Activated CD4-positive, alpha-beta T cell treated with anti-CD3 and anti-CD28 coated beads, Interleukin-2, amount 10 ng/mL, durations not matched to agents 7 days and 5 days (primary cell): ENCODE measurements at regions of chr11 and their contacts with region 1.

Region 1: DNA sequence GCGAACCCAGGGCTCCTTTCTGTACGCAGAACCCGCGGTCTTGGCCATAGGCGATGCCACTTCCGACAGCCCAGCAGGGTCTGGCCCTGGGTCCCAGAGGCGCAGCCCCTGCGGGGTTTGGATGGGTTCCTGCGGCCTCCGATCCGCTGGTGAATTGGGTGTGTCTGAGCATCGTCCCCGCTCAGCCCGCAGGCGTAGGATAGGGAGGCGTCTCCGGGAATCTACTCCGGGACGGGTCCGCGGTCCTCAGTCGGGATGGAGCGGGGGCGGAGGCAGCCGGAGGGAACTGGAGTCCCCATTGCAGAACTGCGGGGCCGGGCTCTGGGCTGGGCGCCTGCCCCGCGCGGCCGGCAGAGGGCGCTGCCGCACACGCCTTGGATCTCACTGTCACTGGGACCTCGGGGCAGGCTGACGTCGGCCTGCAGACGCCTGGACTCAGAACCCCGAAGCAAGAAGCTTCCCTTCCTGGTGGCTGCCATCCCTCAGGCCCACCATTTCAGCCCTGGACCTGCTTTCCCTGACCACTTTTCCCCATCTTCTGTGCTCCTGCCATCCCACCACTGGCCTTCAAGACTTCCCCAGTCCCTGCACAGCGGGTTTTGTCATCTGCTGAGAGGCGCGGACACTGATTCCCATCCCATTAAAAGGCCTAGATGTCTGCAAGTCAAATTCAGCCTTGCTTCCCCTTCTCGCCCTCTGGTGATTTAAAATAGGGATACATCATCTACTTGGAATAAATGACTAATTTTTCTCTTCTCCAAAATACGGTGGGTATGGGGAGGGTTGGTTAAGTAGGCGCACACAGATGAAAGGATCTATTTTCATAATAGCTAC is 38.3 kb upstream of the CREB3L1 start:
- DNase-seq: peak; percentile 78
- H3K4me3 Mint-ChIP-seq: peak overlapping the region; percentile 60
- H3K27ac Mint-ChIP-seq: no peak overlapping the region
- H3K4me1 Mint-ChIP-seq: peaks cover 49% of the 10 kb centered on the region
- H3K27me3 Mint-ChIP-seq: peaks cover 39% of the 10 kb centered on the region

Region 2: DNA sequence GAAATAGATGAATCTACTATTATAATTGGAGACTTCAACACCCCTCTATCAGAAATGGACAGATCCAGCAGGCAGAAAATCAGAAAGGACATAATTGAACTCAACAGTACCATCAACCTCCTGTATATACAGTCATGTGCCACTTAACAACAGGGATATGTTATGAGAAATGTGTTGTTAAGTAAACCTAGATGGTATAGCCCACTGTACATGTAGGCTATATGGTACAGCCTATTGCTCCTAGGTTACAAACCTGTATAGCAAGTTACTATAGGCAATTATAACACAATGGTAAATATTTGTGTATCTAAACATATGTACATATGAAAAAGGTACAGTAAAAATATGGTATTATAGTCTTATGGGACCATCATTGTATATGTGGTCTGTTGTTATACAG is 51.1 kb before region 1 on chr11:
- CTCF ChIA-PET with region 1: no interaction called
- POLR2A ChIA-PET with region 1: no interaction called
- DNase-seq: no peak
- H3K4me3 Mint-ChIP-seq: no peak overlapping the region
- H3K27ac Mint-ChIP-seq: no peak overlapping the region
- H3K4me1 Mint-ChIP-seq: no peaks in the 10 kb centered on the region
- H3K27me3 Mint-ChIP-seq: peaks cover 31% of the 10 kb centered on the region

Region 3: GRCh38 chr11:46295312-46296058 is 56.3 kb after region 1 on chr11:
- CTCF ChIA-PET with region 1: interaction called, 11 read pairs
- POLR2A ChIA-PET with region 1: no interaction called
- DNase-seq: peak; percentile 79
- H3K4me3 Mint-ChIP-seq: peak overlapping the region; percentile 78
- H3K27ac Mint-ChIP-seq: no peak overlapping the region
- H3K4me1 Mint-ChIP-seq: peaks cover 9% of the 10 kb centered on the region
- H3K27me3 Mint-ChIP-seq: peaks cover 23% of the 10 kb centered on the region

Region 4: DNA sequence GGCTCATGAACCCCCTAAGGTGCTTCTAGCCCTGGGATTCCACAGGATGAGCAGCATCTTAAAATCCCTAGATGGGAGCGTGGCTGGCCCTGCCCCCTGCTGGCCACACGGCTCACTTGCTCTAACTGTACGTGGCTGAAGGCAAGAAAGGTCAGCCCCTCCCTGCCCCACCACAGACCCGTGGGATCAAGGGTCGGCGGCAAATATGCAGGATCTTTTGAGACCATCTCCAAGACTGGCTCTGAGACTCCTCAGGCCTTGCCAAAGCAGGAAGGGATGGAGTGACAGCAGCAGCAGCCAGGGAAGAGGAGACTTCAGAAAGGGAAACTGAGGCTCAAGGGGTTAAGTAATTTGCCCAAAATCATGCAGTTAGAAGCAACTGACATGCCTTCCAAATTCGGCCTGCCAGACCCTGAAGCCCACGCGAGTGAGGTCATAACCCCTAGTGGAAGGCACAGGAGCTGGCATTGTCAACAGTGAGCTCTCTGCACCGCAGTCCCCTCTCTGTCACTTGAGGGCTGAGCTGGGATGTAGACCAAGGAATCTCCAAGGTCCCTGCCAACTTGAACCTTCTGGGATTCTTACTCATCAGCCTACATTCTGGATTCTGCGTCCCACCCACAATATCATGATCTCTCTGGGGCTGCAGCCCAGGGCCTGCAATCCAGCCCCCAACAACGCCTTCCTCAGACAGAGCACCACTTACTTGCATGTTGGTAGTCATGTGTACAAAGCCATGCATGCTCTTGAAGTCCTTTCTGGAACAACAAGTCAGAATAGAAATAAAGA is 69.6 kb after region 1 on chr11:
- CTCF ChIA-PET with region 1: interaction called, 27 read pairs
- POLR2A ChIA-PET with region 1: interaction called, 5 read pairs
- DNase-seq: peak; percentile 68
- H3K4me3 Mint-ChIP-seq: no peak overlapping the region
- H3K27ac Mint-ChIP-seq: peak overlapping the region; percentile 3
- H3K4me1 Mint-ChIP-seq: peaks cover 20% of the 10 kb centered on the region
- H3K27me3 Mint-ChIP-seq: peaks cover 3% of the 10 kb centered on the region

Region 5: DNA sequence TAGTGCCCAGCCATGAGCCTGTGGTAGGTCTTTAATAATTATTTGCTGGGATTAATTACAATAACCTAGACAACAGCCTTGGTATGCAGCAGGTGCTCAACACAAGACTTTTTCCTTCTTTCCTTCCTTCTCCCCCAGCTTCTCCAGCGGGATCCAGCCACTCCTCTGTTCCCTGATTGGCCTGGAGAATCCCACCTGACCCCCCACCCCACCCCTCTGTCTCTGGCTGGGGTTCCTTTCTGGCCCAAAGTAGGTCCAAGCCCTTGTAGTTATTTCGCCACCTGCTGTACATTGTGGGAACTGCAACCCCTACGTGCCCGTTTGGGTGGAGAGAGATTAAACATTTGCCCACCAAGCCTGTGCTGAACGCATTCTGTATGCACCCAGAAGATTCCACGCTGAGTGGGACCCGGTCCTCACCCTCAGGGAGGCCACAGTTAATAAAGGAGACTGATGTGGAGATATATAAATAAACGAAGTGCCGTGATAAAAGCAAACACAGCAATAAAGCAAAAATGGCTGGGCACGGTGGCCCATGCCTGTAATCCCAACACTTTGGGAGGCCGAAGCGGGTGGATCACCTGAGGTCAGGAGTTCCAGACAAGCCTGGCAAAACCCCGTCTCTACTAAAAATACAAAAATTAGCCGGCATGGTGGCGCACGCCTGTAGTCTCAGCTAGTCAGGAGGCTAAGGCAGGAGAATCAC is 76.0 kb after region 1 on chr11:
- CTCF ChIA-PET with region 1: interaction called, 27 read pairs
- POLR2A ChIA-PET with region 1: interaction called, 4 read pairs
- DNase-seq: peak; percentile 77
- H3K4me3 Mint-ChIP-seq: no peak overlapping the region
- H3K27ac Mint-ChIP-seq: no peak overlapping the region
- H3K4me1 Mint-ChIP-seq: peaks cover 29% of the 10 kb centered on the region
- H3K27me3 Mint-ChIP-seq: no peaks in the 10 kb centered on the region

Region 6: DNA sequence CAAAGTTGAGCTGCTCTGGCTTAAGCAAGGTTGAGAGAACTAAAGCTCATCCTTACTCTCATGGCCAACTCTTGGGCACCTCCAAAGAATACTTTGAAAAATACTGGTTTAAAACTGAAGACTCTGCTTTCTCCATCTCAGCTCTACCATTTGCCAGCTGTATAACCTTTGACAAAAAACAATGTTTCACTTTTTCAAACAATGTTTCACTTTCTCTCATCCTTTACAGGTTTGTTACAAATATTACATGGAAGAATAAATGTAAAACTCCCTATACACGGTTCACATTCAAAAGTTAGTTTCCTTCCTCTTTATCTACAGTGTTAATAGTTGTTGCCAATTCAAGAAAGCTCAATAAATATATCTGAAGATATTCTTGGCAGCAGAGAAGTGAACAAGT is 335.5 kb after region 1 on chr11:
- CTCF ChIA-PET with region 1: no interaction called
- POLR2A ChIA-PET with region 1: no interaction called
- DNase-seq: no peak
- H3K4me3 Mint-ChIP-seq: no peak overlapping the region
- H3K27ac Mint-ChIP-seq: no peak overlapping the region
- H3K4me1 Mint-ChIP-seq: peaks cover 31% of the 10 kb centered on the region
- H3K27me3 Mint-ChIP-seq: no peaks in the 10 kb centered on the region